ENCODE measurements at regions of chr10 and their contacts with region 1.

Region 1: DNA sequence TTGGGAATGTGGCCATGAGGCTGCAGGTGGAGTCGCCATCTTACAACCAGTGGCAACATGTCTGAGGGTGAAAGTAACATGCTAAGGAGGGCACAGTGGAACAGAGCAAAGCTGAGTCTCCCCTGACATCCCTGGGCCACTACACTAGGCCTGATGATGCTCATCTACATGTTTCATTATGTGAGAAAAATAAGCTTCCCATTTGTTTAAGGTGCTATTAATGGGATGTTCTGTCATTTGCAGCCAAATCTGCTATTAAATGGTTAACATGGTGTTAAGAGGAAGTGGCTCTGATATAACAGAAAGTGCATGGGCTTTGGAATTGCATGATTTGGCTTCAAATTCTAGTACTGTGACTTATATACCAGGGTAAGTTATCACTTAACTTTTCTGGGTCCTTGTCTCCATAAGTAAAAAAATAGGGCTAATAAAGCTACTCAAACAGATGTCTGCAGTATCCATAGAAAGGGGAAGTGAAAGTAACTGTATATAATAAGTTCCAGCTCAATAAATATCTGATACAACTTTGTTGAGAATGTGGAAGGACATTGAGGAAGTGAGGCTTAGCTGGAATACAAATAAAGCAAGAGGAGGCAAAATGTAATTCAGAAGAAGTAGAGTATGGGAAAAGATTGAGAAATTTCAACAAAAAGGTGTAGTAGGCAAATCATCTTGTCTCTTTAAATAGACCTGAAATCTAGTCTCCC is 158.9 kb downstream of the RTKN2 start:
- DNase-seq: no peak
- ATAC-seq: peak; percentile 66
- H3K4me3 ChIP-seq: peak overlapping the region; percentile 9
- H3K4me3 Mint-ChIP-seq: peak overlapping the region in 8 of 10 donors; percentile 21 to 69 (median 58)
- H3K27ac ChIP-seq: no peak overlapping the region
- H3K27ac Mint-ChIP-seq: peak overlapping the region in 8 of 9 donors; percentile 20 to 88 (median 52)
- H3K4me1 ChIP-seq: peaks cover 7 to 26% of the 10 kb centered on the region in 2 donors
- H3K4me1 Mint-ChIP-seq: peaks cover 34 to 54% (median 43%) of the 10 kb centered on the region in 7 donors
- H3K27me3 ChIP-seq: no peaks in the 10 kb centered on the region
- H3K27me3 Mint-ChIP-seq: no peaks in the 10 kb centered on the region

Region 2: GRCh38 chr10:61760943-61761824 is 348.6 kb before region 1 on chr10:
- CTCF ChIA-PET with region 1: no interaction called
- POLR2A ChIA-PET with region 1: no interaction called
- intact Hi-C with region 1: no loop called
- DNase-seq: no peak
- ATAC-seq: no peak
- H3K4me3 ChIP-seq: no peak overlapping the region
- H3K4me3 Mint-ChIP-seq: no peak overlapping the region
- H3K27ac ChIP-seq: no peak overlapping the region
- H3K27ac Mint-ChIP-seq: peak overlapping the region in 1 of 9 donors; percentile 25
- H3K4me1 ChIP-seq: peaks cover 6 to 8% of the 10 kb centered on the region in 2 donors
- H3K4me1 Mint-ChIP-seq: peaks cover 3 to 30% (median 17%) of the 10 kb centered on the region in 7 donors
- H3K27me3 ChIP-seq: no peaks in the 10 kb centered on the region
- H3K27me3 Mint-ChIP-seq: peaks cover 0 to 4% (median 0%) of the 10 kb centered on the region in 5 donors

Region 3: DNA sequence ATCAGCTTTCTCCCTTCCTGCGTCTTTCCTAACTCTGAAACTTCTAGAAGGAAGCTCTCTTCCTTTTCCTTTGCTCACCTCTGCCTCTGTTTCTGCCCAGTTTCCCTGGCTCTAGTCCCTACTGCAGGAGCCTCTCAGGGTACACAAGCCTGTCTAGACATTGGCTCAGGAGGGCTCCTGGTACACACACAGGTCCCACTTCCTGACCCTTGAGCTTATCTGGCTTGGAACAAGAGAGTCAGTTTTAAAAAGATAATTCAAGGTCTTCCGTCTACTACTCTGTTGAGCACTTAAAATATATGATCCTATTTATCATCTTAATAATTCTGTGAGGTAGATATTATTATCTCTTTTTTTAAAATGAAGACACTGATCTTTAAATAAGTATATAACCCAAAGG is 18.2 kb after region 1 on chr10:
- CTCF ChIA-PET with region 1: no interaction called
- POLR2A ChIA-PET with region 1: no interaction called
- intact Hi-C with region 1: loop called in 1 of 2 experiments (anchors 2 kb)
- DNase-seq: no peak
- ATAC-seq: no peak
- H3K4me3 ChIP-seq: no peak overlapping the region
- H3K4me3 Mint-ChIP-seq: no peak overlapping the region
- H3K27ac ChIP-seq: no peak overlapping the region
- H3K27ac Mint-ChIP-seq: peak overlapping the region in 4 of 9 donors; percentile 8 to 73 (median 38)
- H3K4me1 ChIP-seq: peaks cover 0 to 5% of the 10 kb centered on the region in 2 donors
- H3K4me1 Mint-ChIP-seq: peaks cover 2 to 13% (median 9%) of the 10 kb centered on the region in 7 donors
- H3K27me3 ChIP-seq: no peaks in the 10 kb centered on the region
- H3K27me3 Mint-ChIP-seq: peaks cover 0 to 4% (median 0%) of the 10 kb centered on the region in 5 donors

Measured in naive thymus-derived CD4-positive, alpha-beta T cell (primary cell).